ENCODE measurements at regions of chr2 and their contacts with region 1.

Region 1: DNA sequence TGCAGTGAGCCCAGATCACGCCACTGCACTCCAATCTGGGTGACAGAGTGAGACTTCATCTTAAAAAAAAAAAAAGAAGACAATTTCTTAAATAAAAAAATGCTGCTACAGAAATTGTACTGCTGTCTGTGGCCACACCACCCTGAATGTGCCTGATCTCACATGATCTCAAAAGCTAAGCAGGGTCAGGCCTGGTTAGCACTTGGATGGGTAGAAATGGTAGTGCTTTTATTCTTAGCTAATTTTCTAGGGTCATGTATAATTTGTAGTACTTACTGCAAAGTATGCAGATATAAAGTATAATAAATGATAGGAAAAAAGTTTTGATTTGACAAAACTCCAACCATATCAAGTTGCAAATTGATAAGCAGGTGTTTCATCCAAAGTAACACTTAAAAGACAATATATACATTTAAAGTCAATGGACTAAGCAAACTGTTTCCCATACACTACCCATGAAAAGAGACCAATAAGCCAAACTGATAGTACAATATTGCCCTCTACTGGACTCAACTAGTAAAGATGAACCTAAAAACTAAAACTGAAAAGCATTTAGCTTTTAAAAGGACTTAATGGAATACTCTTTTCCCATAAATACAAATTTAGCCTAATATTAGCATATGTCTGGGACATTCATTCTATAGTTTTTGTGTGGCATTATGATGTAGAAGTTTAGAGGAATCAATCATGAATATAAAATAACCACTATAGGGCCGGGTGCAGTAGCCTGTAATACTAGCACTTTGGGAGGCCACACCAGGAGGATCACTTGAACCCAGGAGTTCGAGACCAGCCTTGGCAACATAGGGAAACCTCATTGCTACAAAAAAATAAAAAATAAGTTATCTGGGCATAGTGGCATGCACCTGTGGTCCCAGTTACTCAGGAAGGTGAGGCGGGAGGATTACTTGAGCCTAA is 18.6 kb upstream of the PEX13 start:
- DNase-seq: no peak
- H3K4me3 ChIP-seq: no peak overlapping the region
- H3K27me3 ChIP-seq: no peaks in the 10 kb centered on the region
- CTCF ChIP-seq: peak; percentile 49

Region 2: GRCh38 chr2:60707750-60708371 is 291.0 kb before region 1 on chr2:
- CTCF ChIA-PET with region 1: interaction called, 92 read pairs
- POLR2A ChIA-PET with region 1: no interaction called
- DNase-seq: no peak
- H3K4me3 ChIP-seq: no peak overlapping the region
- H3K27me3 ChIP-seq: no peaks in the 10 kb centered on the region
- CTCF ChIP-seq: peak; percentile 66

Region 3: DNA sequence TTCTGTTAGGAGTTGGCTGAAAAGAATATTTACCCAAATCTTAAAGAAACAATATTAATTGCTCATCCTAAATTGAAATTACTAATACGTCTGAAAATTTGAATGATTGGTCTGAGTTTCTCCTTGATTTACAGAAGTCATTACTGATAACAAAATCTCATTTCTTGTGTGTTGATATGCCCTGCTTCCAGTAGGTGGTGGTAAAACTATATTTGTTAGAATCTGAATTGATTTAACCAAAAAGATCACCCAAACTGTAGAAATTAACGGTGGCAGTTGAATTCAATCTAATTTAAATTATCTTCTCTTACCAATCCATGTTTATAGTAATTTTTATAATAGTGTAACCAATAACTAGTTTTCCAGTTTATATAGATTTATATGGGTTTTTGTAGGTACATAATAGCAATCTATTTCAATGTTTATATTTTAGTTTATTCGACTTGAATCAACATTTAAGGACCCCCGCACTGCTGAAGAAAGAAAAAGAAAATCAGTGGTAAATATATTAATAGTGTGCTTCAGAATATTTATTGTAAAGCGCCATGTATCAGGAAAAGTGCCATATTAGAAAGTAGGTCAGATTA is 204.5 kb before region 1 on chr2:
- CTCF ChIA-PET with region 1: interaction called, 10 read pairs
- POLR2A ChIA-PET with region 1: no interaction called
- DNase-seq: no peak
- H3K4me3 ChIP-seq: no peak overlapping the region
- H3K27me3 ChIP-seq: no peaks in the 10 kb centered on the region
- CTCF ChIP-seq: peak; percentile 44; the same call in 1 of the 2 replicates

Region 4: GRCh38 chr2:61109291-61109690 is 110.4 kb after region 1 on chr2:
- CTCF ChIA-PET with region 1: no interaction called
- POLR2A ChIA-PET with region 1: no interaction called
- DNase-seq: no peak
- H3K4me3 ChIP-seq: no peak overlapping the region
- H3K27me3 ChIP-seq: no peaks in the 10 kb centered on the region
- CTCF ChIP-seq: no peak

Region 5: GRCh38 chr2:61210331-61210981 is 211.6 kb after region 1 on chr2:
- CTCF ChIA-PET with region 1: no interaction called
- POLR2A ChIA-PET with region 1: no interaction called
- DNase-seq: peak; percentile 64
- H3K4me3 ChIP-seq: no peak overlapping the region
- H3K27me3 ChIP-seq: no peaks in the 10 kb centered on the region
- CTCF ChIP-seq: no peak

Measured in BJ (cell line).